A549 (cell line): ENCODE measurements at regions of chr5 and their contacts with region 1.

Region 1: GRCh38 chr5:178058321-178059012 is 54.9 kb upstream of the N4BP3 start:
- DNase-seq: no peak
- ATAC-seq: no peak
- H3K4me3 ChIP-seq: no peak overlapping the region
- H3K27ac ChIP-seq: no peak overlapping the region
- H3K4me1 ChIP-seq: no peaks in the 10 kb centered on the region
- CTCF ChIP-seq: no peak
- EP300 ChIP-seq: no peak
- POLR2A ChIP-seq: no peak
- RAD21 ChIP-seq: no peak

Region 2: GRCh38 chr5:177607452-177608192 is 450.8 kb before region 1 on chr5:
- CTCF ChIA-PET with region 1: interaction called, 25 read pairs
- POLR2A ChIA-PET with region 1: no interaction called
- DNase-seq: peak; percentile 78 to 90
- ATAC-seq: peak; percentile 86 to 95
- H3K4me3 ChIP-seq: no peak overlapping the region
- H3K27ac ChIP-seq: no peak overlapping the region
- H3K4me1 ChIP-seq: peaks cover 12% of the 10 kb centered on the region; the same call in 1 of the 3 replicates
- CTCF ChIP-seq: peak; percentile 75
- EP300 ChIP-seq: no peak
- POLR2A ChIP-seq: no peak
- RAD21 ChIP-seq: peak; percentile 71 to 75

Region 3: GRCh38 chr5:178090858-178091540 is 32.5 kb after region 1 on chr5:
- CTCF ChIA-PET with region 1: interaction called, 17 read pairs
- POLR2A ChIA-PET with region 1: no interaction called
- DNase-seq: no peak
- ATAC-seq: no peak
- H3K4me3 ChIP-seq: no peak overlapping the region
- H3K27ac ChIP-seq: no peak overlapping the region
- H3K4me1 ChIP-seq: no peaks in the 10 kb centered on the region
- CTCF ChIP-seq: no peak
- EP300 ChIP-seq: no peak
- POLR2A ChIP-seq: no peak
- RAD21 ChIP-seq: no peak